A549 (cell line): ENCODE measurements at regions of chr21 and their contacts with region 1.

Region 1: GRCh38 chr21:36676039-36676950 is 22.6 kb upstream of the SIM2 start:
- DNase-seq: no peak
- ATAC-seq: no peak
- H3K4me3 ChIP-seq: no peak overlapping the region
- H3K27ac ChIP-seq: no peak overlapping the region
- H3K4me1 ChIP-seq: peaks cover 4% of the 10 kb centered on the region; the same call in 1 of the 3 replicates
- CTCF ChIP-seq: no peak
- EP300 ChIP-seq: no peak
- POLR2A ChIP-seq: no peak
- RAD21 ChIP-seq: no peak

Region 2: DNA sequence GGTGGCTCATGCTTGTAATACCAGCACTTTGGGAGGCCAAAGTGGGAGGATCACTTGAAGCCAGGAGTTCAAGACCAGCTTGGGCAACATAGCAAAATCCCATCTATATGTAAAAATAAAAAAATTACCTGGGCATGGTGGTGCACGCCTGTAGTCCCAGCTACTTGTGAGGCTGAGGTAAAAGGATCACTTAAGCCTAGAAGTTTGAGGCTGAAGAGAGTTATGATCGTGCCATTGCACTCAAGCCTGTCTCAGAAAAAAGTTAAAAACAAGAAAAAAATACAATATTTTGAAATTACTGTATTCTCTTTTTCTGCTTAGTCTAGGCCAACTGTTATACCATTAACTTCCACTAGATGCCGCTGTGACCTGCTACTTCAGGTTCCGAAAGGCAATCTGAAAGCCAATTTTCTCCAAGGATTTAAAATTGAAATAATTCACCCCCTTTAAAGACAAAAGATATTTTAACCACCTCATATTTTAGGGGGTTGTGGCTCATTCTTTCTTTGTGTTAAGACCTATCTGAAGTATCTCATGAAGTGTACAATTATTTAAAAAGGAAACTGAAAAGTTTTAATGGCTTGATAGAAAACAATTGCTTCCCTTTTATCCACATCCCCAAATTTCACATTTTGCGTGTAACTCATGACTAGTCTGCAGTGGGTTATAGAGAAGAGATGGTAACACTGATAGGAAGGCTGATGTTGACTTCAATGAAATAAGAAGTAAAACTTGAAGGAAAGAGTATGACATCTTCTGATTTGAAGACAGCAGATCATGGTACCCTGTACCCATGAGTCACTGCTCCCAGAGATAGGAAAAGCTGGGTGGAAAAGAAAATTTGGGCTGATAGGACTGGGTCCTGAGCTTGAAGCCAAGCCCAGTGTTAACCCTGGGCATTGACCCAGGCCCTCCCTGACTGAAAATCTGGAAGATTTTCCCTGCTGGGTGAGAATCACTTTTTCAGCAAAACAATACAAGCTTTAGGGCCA is 171.9 kb before region 1 on chr21:
- CTCF ChIA-PET with region 1: no interaction called
- POLR2A ChIA-PET with region 1: no interaction called
- DNase-seq: peak; percentile 5 to 44
- ATAC-seq: no peak
- H3K4me3 ChIP-seq: no peak overlapping the region
- H3K27ac ChIP-seq: peak overlapping the region; percentile 23 to 59; a peak in 4 of 6 replicates
- H3K4me1 ChIP-seq: peaks cover 16% of the 10 kb centered on the region; the same call in 2 of the 3 replicates
- CTCF ChIP-seq: peak; percentile 76
- EP300 ChIP-seq: no peak
- POLR2A ChIP-seq: no peak
- RAD21 ChIP-seq: peak; percentile 76 to 82

Region 3: GRCh38 chr21:36661511-36662309 is 14.6 kb before region 1 on chr21:
- CTCF ChIA-PET with region 1: interaction called, 10 read pairs
- POLR2A ChIA-PET with region 1: no interaction called
- DNase-seq: peak; percentile 19 to 54
- ATAC-seq: peak in 1 of 2 experiments; percentile 78; a peak in 3 of 6 replicates
- H3K4me3 ChIP-seq: no peak overlapping the region
- H3K27ac ChIP-seq: peak overlapping the region; percentile 16 to 70; a peak in 3 of 6 replicates
- H3K4me1 ChIP-seq: peaks cover 14% of the 10 kb centered on the region; the same call in 1 of the 3 replicates
- CTCF ChIP-seq: peak; percentile 47
- EP300 ChIP-seq: no peak
- POLR2A ChIP-seq: no peak
- RAD21 ChIP-seq: peak; percentile 63 to 74